ENCODE measurements at regions of chr1 and their contacts with region 1.

Region 1: DNA sequence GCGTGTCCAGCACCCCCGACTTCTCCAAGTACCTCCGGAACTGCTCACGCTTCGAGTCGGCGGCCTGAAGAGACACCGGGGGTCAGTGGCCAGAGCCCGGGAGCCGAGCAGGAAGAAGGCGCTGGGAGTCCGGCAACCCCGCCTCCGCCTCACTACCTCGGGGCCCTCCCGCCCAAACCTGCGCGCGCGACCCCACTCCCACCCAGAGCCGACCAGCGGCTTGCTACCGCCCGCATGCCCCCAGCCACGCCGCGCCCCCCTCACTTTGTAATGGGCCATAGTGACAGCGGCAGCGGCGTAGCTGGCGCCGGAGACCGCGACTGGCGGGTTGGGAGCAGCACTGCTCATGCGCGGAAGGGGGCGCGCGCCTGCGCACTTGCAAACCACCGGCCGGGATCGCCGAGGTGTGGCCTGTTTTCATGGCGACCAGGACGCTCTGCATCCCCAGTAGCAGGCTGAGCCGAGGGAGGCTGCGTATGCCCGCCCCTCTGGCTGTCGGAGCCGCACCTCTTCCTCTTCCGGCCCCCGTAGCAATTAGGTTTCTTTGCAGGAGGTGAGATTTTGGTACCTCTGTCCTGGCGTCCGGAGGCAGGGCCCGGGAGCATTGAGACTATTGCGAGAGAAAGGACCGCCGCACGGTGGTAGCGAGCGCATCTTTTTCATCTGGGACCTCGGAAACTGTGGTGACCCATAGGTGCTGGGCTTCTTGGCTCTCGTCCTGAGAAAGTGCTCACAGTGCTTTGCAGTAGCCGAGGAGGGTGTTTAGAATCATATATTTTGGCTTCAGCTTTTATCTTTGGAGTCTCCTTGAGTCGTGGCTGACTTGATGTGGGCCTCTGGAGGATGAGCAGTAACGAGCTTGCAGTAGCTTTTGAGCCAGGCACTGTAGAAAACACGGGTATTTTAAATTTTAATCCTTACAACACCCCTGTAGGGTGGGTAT is at the start of gene MYCBP:
- DNase-seq: peak; percentile 97
- H3K4me3 Mint-ChIP-seq: peak within 1 kb of the TSS; percentile 86
- H3K27ac Mint-ChIP-seq: peak within 1 kb of the TSS; percentile 57
- H3K4me1 Mint-ChIP-seq: peaks cover 19% of the 10 kb centered on the region
- H3K27me3 Mint-ChIP-seq: no peaks in the 10 kb centered on the region
- total RNA-seq, gene MYCBP: 54.6 to 58.0 TPM

Region 2: GRCh38 chr1:38885092-38885491 is 11.8 kb after region 1 on chr1:
- CTCF ChIA-PET with region 1: no interaction called
- intact Hi-C with region 1: no loop called
- DNase-seq: no peak
- H3K4me3 Mint-ChIP-seq: no peak overlapping the region
- H3K27ac Mint-ChIP-seq: no peak overlapping the region
- H3K4me1 Mint-ChIP-seq: no peaks in the 10 kb centered on the region
- H3K27me3 Mint-ChIP-seq: no peaks in the 10 kb centered on the region

Region 3: GRCh38 chr1:38990738-38991639 is 117.7 kb after region 1 on chr1 and contains the start of gene AKIRIN1:
- CTCF ChIA-PET with region 1: no interaction called
- intact Hi-C with region 1: loop called (anchors 2 kb)
- DNase-seq: peak; percentile 97
- H3K4me3 Mint-ChIP-seq: peak within 1 kb of the TSS; percentile 80
- H3K27ac Mint-ChIP-seq: peak within 1 kb of the TSS; percentile 84
- H3K4me1 Mint-ChIP-seq: peaks cover 52% of the 10 kb centered on the region
- H3K27me3 Mint-ChIP-seq: no peaks in the 10 kb centered on the region
- total RNA-seq, gene AKIRIN1: 58.1 to 58.5 TPM